ENCODE measurements at regions of chr1 and their contacts with region 1.

Region 1: GRCh38 chr1:104825401-104825800 is 1075.7 kb downstream of the AMY1C start:
- DNase-seq: no peak
- ATAC-seq: no peak
- H3K4me3 Mint-ChIP-seq: no peak overlapping the region
- H3K27ac Mint-ChIP-seq: no peak overlapping the region
- H3K4me1 Mint-ChIP-seq: no peaks in the 10 kb centered on the region
- H3K27me3 Mint-ChIP-seq: no peaks in the 10 kb centered on the region
- CTCF ChIP-seq: no peak

Region 2: GRCh38 chr1:104807531-104807930 is 17.9 kb before region 1 on chr1:
- CTCF ChIA-PET with region 1: no interaction called
- POLR2A ChIA-PET with region 1: no interaction called
- intact Hi-C with region 1: no loop called
- DNase-seq: no peak
- ATAC-seq: no peak
- H3K4me3 Mint-ChIP-seq: no peak overlapping the region
- H3K27ac Mint-ChIP-seq: no peak overlapping the region
- H3K4me1 Mint-ChIP-seq: no peaks in the 10 kb centered on the region
- H3K27me3 Mint-ChIP-seq: no peaks in the 10 kb centered on the region
- CTCF ChIP-seq: no peak

Region 3: GRCh38 chr1:104979651-104980050 is 154.2 kb after region 1 on chr1:
- CTCF ChIA-PET with region 1: no interaction called
- POLR2A ChIA-PET with region 1: no interaction called
- intact Hi-C with region 1: loop called (anchors 5 kb)
- DNase-seq: no peak
- ATAC-seq: no peak
- H3K4me3 Mint-ChIP-seq: no peak overlapping the region
- H3K27ac Mint-ChIP-seq: no peak overlapping the region
- H3K4me1 Mint-ChIP-seq: no peaks in the 10 kb centered on the region
- H3K27me3 Mint-ChIP-seq: no peaks in the 10 kb centered on the region
- CTCF ChIP-seq: no peak

Measured in activated B cell treated with CpG ODN at 0.5 μM for 24 hours (primary cell).